CD4-positive, alpha-beta memory T cell (primary cell): ENCODE measurements at regions of chr12 and their contacts with region 1.

Region 1: GRCh38 chr12:106774005-106774807 is at the start of gene RIC8B:
- DNase-seq: peak; percentile 73 to 84 (median 77)
- H3K4me3 ChIP-seq: peak within 1 kb of the TSS; percentile 55 to 78
- H3K4me3 Mint-ChIP-seq: peak within 1 kb of the TSS; percentile 92 to 98 (median 96)
- H3K27ac ChIP-seq: peak within 1 kb of the TSS; percentile 84
- H3K27ac Mint-ChIP-seq: peak within 1 kb of the TSS; percentile 89 to 99 (median 98)
- H3K4me1 ChIP-seq: peaks cover 32% of the 10 kb centered on the region
- H3K4me1 Mint-ChIP-seq: peaks cover 24 to 51% (median 39%) of the 10 kb centered on the region in 4 donors
- H3K27me3 ChIP-seq: no peaks in the 10 kb centered on the region
- H3K27me3 Mint-ChIP-seq: no peaks in the 10 kb centered on the region
- total RNA-seq, gene RIC8B: 20.8 to 25.0 TPM

Region 2: DNA sequence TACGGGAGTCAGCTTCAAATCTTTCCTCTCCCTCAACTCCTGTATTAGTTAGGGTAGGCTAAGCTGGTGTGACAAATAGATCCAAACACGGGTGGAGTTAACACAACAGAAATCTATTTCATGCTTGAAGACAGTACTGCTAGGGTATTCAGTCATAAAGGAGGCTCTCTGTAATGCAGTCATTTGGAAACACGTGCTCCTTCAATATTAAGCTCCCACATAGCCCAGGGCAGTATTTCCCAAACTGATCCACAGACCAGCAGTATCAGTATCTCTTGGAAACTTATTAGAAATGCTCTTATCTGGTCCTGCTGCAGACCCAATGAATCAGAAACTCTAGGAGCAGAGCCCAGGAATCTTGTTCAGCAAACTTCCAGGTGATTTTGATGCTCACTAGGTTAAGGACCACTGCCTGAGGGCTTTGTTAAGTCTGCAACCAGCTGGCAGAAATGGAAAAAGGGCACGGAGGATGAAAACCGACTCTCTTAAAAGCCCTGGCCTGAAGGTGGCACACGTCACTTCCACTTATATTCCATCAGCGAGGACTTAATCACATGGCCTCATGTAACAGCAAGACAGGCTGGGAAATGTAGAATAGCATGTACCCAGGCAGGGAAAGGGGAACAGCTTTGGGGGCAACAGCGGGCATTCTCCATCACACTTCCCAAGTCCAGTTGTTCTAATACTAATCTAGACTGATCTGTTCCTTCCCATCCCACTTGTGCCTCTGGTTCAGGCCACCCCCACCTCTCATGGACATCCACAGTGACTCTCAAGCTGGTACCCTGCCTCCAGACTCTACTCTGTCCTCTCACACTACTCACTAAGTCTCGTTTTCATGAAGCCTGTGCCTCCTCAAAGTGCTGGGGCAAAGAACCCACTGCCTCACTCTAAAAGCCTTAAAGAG is 37.9 kb before region 1 on chr12:
- CTCF ChIA-PET with region 1: interaction called, 3 read pairs
- POLR2A ChIA-PET with region 1: no interaction called
- intact Hi-C with region 1: loop called (anchors 5 kb)
- DNase-seq: peak in 4 of 5 donors; percentile 25 to 40 (median 31)
- H3K4me3 ChIP-seq: no peak overlapping the region
- H3K4me3 Mint-ChIP-seq: no peak overlapping the region
- H3K27ac ChIP-seq: no peak overlapping the region
- H3K27ac Mint-ChIP-seq: peak overlapping the region in 1 of 7 donors; percentile 65
- H3K4me1 ChIP-seq: no peaks in the 10 kb centered on the region
- H3K4me1 Mint-ChIP-seq: peaks cover 1 to 14% (median 9%) of the 10 kb centered on the region in 4 donors
- H3K27me3 ChIP-seq: no peaks in the 10 kb centered on the region
- H3K27me3 Mint-ChIP-seq: no peaks in the 10 kb centered on the region

Region 3: DNA sequence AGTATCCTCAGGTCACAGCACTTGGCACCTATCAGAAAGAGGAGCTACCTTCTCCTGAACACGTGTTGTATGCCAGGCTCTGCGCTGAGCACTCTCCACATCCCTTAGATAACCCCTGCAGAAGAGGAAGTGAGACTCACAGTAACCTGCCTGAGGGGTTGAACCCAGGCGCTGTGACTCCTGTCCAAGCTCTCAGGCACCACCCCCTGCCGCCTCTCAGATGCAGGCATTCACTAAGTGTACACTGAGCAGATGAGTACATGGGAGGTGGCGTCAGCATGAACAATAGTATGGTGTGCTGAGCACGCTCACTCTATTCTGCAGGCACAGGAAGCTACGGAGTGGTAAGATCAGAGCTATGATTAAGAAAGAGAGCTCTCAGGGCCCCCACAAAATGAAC is 20.7 kb before region 1 on chr12:
- CTCF ChIA-PET with region 1: no interaction called
- POLR2A ChIA-PET with region 1: interaction called, 11 read pairs
- intact Hi-C with region 1: loop called (anchors 1 kb)
- DNase-seq: peak; percentile 32 to 71 (median 43)
- H3K4me3 ChIP-seq: no peak overlapping the region
- H3K4me3 Mint-ChIP-seq: peak overlapping the region; percentile 36 to 80 (median 67)
- H3K27ac ChIP-seq: peak overlapping the region; percentile 21
- H3K27ac Mint-ChIP-seq: peak overlapping the region; percentile 58 to 93 (median 91)
- H3K4me1 ChIP-seq: peaks cover 42% of the 10 kb centered on the region
- H3K4me1 Mint-ChIP-seq: peaks cover 29 to 57% (median 45%) of the 10 kb centered on the region in 4 donors
- H3K27me3 ChIP-seq: no peaks in the 10 kb centered on the region
- H3K27me3 Mint-ChIP-seq: no peaks in the 10 kb centered on the region

Region 4: GRCh38 chr12:106883426-106883825 is 109.2 kb after region 1 on chr12:
- CTCF ChIA-PET with region 1: no interaction called
- POLR2A ChIA-PET with region 1: no interaction called
- intact Hi-C with region 1: no loop called
- DNase-seq: no peak
- H3K4me3 ChIP-seq: no peak overlapping the region
- H3K4me3 Mint-ChIP-seq: no peak overlapping the region
- H3K27ac ChIP-seq: no peak overlapping the region
- H3K27ac Mint-ChIP-seq: peak overlapping the region in 3 of 7 donors; percentile 9 to 17 (median 17)
- H3K4me1 ChIP-seq: no peaks in the 10 kb centered on the region
- H3K4me1 Mint-ChIP-seq: no peaks in the 10 kb centered on the region
- H3K27me3 ChIP-seq: no peaks in the 10 kb centered on the region
- H3K27me3 Mint-ChIP-seq: no peaks in the 10 kb centered on the region

Region 5: GRCh38 chr12:107277855-107278254 is 503.6 kb after region 1 on chr12:
- CTCF ChIA-PET with region 1: no interaction called
- POLR2A ChIA-PET with region 1: no interaction called
- intact Hi-C with region 1: no loop called
- DNase-seq: no peak
- H3K4me3 ChIP-seq: no peak overlapping the region
- H3K4me3 Mint-ChIP-seq: no peak overlapping the region
- H3K27ac ChIP-seq: no peak overlapping the region
- H3K27ac Mint-ChIP-seq: no peak overlapping the region
- H3K4me1 ChIP-seq: no peaks in the 10 kb centered on the region
- H3K4me1 Mint-ChIP-seq: no peaks in the 10 kb centered on the region
- H3K27me3 ChIP-seq: peaks cover 3% of the 10 kb centered on the region
- H3K27me3 Mint-ChIP-seq: peaks cover 6% of the 10 kb centered on the region in 2 donors

Region 6: GRCh38 chr12:107477947-107478610 is 703.9 kb after region 1 on chr12:
- CTCF ChIA-PET with region 1: no interaction called
- POLR2A ChIA-PET with region 1: no interaction called
- intact Hi-C with region 1: no loop called
- DNase-seq: no peak
- H3K4me3 ChIP-seq: no peak overlapping the region
- H3K4me3 Mint-ChIP-seq: no peak overlapping the region
- H3K27ac ChIP-seq: no peak overlapping the region
- H3K27ac Mint-ChIP-seq: no peak overlapping the region
- H3K4me1 ChIP-seq: peaks cover 21% of the 10 kb centered on the region
- H3K4me1 Mint-ChIP-seq: peaks cover 14 to 67% (median 37%) of the 10 kb centered on the region in 4 donors
- H3K27me3 ChIP-seq: no peaks in the 10 kb centered on the region
- H3K27me3 Mint-ChIP-seq: no peaks in the 10 kb centered on the region

Region 7: DNA sequence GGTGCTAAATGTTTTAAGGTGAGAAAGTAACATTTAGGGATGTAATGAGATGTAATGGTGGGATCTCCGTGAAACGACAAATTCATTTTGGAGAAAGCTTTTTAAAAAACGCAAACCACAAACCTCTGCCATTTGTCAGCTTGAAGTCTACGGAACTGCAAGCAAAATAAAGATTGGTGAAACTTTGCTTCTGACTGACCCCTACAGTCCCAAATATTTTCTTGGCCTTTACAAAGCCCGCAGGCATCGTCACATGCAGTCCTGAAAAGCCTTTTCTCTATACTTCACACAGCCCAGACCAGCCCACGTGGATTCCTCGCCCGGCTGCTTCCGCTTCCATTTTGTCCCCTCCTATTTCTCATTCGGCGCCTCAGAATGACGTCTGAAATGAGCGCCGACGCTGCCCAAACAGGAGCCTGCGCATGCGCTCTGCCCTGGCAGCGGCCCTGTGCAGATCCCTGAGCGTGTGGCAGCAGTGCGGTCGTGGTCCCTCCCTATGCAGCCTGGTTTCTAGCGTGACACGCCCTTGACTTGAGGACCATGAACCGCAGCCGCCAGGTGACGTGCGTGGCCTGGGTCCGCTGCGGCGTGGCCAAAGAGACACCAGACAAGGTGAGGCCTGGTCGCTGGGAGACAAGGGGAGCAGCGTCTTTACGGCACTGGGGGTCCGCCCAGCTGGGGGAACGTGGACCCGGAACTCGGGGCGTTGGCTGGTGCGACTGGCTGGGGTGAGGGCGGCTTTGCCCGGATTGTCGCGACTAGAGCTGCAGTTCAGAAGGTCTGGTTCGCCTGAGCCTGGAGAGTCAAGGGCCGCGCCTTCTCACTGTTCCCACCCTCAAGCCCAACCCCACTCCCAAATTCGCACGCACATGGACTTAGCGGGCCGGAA is 911.4 kb after region 1 on chr12 and contains the start of gene PWP1:
- CTCF ChIA-PET with region 1: no interaction called
- POLR2A ChIA-PET with region 1: no interaction called
- intact Hi-C with region 1: loop called (anchors 10 kb)
- DNase-seq: peak; percentile 94 to 97 (median 95)
- H3K4me3 ChIP-seq: peak within 1 kb of the TSS; percentile 94 to 98
- H3K4me3 Mint-ChIP-seq: peak within 1 kb of the TSS; percentile 96 to 99 (median 97)
- H3K27ac ChIP-seq: peak within 1 kb of the TSS; percentile 78
- H3K27ac Mint-ChIP-seq: peak within 1 kb of the TSS; percentile 94 to 100 (median 98)
- H3K4me1 ChIP-seq: peaks cover 25% of the 10 kb centered on the region
- H3K4me1 Mint-ChIP-seq: peaks cover 14 to 37% (median 26%) of the 10 kb centered on the region in 4 donors
- H3K27me3 ChIP-seq: no peaks in the 10 kb centered on the region
- H3K27me3 Mint-ChIP-seq: no peaks in the 10 kb centered on the region
- total RNA-seq, gene PWP1: 24.3 to 25.6 TPM